GM12878 (cell line): ENCODE measurements at regions of chr1 and their contacts with region 1.

Region 1: GRCh38 chr1:94061513-94062443 is 59.2 kb downstream of the ABCA4 start:
- DNase-seq: no peak
- ATAC-seq: peak; percentile 95
- H3K4me3 ChIP-seq: no peak overlapping the region
- H3K27ac ChIP-seq: no peak overlapping the region
- H3K4me1 ChIP-seq: no peaks in the 10 kb centered on the region
- H3K27me3 ChIP-seq: no peaks in the 10 kb centered on the region; a peak in 1 of 4 replicates
- CTCF ChIP-seq: peak; percentile 84 to 89 (median 86)
- EP300 ChIP-seq: no peak
- POLR2A ChIP-seq: no peak
- RAD21 ChIP-seq: peak; percentile 73

Region 2: GRCh38 chr1:94039514-94039870 is 22.3 kb before region 1 on chr1:
- CTCF ChIA-PET with region 1: interaction called, 22 read pairs
- POLR2A ChIA-PET with region 1: no interaction called
- RAD21 ChIA-PET with region 1: interaction called, 6 read pairs
- SMC1A ChIA-PET with region 1: interaction called, 4 read pairs
- in situ Hi-C with region 1: no loop called
- intact Hi-C with region 1: no loop called
- DNase-seq: no peak
- ATAC-seq: peak; percentile 65
- H3K4me3 ChIP-seq: no peak overlapping the region
- H3K27ac ChIP-seq: no peak overlapping the region
- H3K4me1 ChIP-seq: peaks cover 6% of the 10 kb centered on the region; the same call in 1 of the 2 replicates
- H3K27me3 ChIP-seq: no peaks in the 10 kb centered on the region; a peak in 1 of 4 replicates
- CTCF ChIP-seq: peak; percentile 78 to 92 (median 86)
- EP300 ChIP-seq: no peak
- POLR2A ChIP-seq: no peak
- RAD21 ChIP-seq: peak; percentile 53

Region 3: GRCh38 chr1:94186946-94187345 is 125.2 kb after region 1 on chr1:
- CTCF ChIA-PET with region 1: interaction called, 4 read pairs
- POLR2A ChIA-PET with region 1: no interaction called
- RAD21 ChIA-PET with region 1: no interaction called
- SMC1A ChIA-PET with region 1: no interaction called
- in situ Hi-C with region 1: no loop called
- intact Hi-C with region 1: loop called (anchors 5 kb)
- DNase-seq: no peak
- ATAC-seq: no peak
- H3K4me3 ChIP-seq: no peak overlapping the region
- H3K27ac ChIP-seq: no peak overlapping the region
- H3K4me1 ChIP-seq: no peaks in the 10 kb centered on the region
- H3K27me3 ChIP-seq: no peaks in the 10 kb centered on the region; a peak in 1 of 4 replicates
- CTCF ChIP-seq: no peak
- EP300 ChIP-seq: no peak
- POLR2A ChIP-seq: no peak
- RAD21 ChIP-seq: no peak

Region 4: DNA sequence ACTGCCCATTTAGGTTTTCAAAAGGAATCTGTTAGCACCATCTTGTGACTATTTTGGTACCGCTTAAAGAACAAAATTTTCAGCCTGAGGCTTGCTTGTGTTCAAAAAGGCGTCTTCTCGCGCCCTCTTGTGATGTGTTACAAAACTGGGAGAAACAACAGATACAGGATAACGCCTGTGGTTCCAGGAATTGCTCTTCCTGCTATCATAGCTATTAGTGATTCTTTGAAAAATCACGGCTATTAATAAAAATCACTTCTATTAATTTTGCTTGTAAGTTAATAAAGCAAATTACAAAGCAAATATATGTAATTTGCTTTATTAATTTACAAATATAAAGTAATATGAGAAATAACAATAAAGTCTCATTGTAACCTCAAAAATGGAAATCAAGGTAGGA is 274.2 kb after region 1 on chr1:
- CTCF ChIA-PET with region 1: interaction called, 173 read pairs
- POLR2A ChIA-PET with region 1: interaction called, 3 read pairs
- RAD21 ChIA-PET with region 1: interaction called, 79 read pairs
- SMC1A ChIA-PET with region 1: interaction called, 79 read pairs
- in situ Hi-C with region 1: loop called (anchors 5 kb)
- intact Hi-C with region 1: loop called (anchors 1 kb)
- DNase-seq: no peak
- ATAC-seq: peak; percentile 69
- H3K4me3 ChIP-seq: no peak overlapping the region
- H3K27ac ChIP-seq: no peak overlapping the region; the same call in 1 of the 2 replicates
- H3K4me1 ChIP-seq: peaks cover 23% of the 10 kb centered on the region
- H3K27me3 ChIP-seq: no peaks in the 10 kb centered on the region
- CTCF ChIP-seq: peak; percentile 61 to 82 (median 81)
- EP300 ChIP-seq: no peak
- POLR2A ChIP-seq: no peak
- RAD21 ChIP-seq: peak; percentile 93

Region 5: DNA sequence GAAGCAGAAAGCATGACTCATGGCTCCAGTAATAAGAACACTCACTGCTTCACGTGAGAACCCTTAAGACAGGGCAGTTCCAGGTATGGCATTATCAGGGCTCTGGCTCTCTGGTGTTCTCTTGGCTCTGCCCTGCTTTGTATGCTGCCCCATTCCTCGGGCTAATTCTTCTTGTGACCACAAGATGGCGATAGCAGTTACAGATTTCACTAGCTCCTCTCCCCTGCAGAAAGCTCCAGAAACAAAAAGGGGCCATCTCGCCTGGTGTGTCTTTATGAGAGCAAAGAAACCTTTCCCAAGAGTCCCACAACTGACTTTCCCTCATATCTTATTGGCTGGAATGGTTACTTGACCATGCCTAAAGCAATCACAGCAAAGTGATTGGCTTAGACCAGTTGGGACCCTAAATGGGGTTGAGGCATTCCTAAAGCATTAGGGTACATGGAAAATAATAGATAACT is 419.7 kb after region 1 on chr1:
- CTCF ChIA-PET with region 1: interaction called, 14 read pairs
- POLR2A ChIA-PET with region 1: no interaction called
- RAD21 ChIA-PET with region 1: no interaction called
- SMC1A ChIA-PET with region 1: interaction called, 7 read pairs
- in situ Hi-C with region 1: no loop called
- intact Hi-C with region 1: no loop called
- DNase-seq: peak; percentile 9
- ATAC-seq: peak; percentile 98
- H3K4me3 ChIP-seq: no peak overlapping the region
- H3K27ac ChIP-seq: no peak overlapping the region
- H3K4me1 ChIP-seq: no peaks in the 10 kb centered on the region
- H3K27me3 ChIP-seq: no peaks in the 10 kb centered on the region
- CTCF ChIP-seq: peak; percentile 79 to 84 (median 83)
- EP300 ChIP-seq: no peak
- POLR2A ChIP-seq: no peak
- RAD21 ChIP-seq: peak; percentile 82